Panc1 (cell line): ENCODE measurements at regions of chr17 and their contacts with region 1.

Region 1: GRCh38 chr17:80008383-80008840 is 27.3 kb downstream of the TBC1D16 start:
- DNase-seq: no peak
- ATAC-seq: peak; percentile 87
- H3K4me3 ChIP-seq: no peak overlapping the region
- H3K27ac ChIP-seq: no peak overlapping the region
- H3K4me1 ChIP-seq: peaks cover 7% of the 10 kb centered on the region
- H3K27me3 ChIP-seq: no peaks in the 10 kb centered on the region
- CTCF ChIP-seq: peak; percentile 99

Region 2: DNA sequence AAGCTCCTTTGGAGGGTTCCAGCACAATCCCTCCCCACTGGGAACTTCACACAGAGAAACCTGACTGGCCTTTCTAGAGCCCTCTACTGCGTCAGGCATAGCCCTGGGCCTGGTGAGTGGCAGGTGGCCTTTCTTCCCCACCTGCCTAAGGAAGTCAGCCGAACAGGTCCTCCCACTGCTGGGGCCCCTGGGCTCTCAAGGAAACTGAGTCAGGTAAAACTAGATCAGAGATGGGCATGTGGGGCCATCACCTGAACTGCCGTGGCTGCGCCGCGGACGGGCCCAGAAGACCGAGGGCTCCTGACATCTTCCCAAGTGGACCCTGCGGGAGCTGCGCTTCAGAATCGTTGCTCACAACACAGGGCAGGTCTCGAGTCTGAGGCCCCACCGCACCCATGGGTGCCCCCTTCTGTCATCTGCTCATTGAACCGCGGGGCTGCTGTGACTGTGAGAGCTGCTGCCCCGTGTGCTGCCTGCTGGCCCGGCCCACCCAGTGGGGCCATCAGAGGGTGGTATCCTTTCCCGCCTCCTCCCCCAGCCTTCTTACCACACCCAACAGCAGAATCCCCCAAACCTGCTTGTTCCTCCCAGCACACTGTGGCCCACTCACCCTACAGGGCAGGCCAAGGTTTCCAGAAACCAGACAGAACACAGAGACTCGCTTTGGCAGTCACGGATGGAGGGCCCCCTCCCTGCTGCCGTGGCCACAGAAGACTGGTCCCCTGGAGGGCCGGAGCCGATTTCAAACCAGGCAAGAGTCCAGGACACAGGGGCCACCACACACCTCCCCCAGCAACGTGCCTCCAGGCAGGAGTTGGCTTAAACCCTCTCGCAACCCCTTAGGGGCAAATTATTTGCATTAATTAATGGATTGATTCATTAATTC is 53.9 kb before region 1 on chr17:
- CTCF ChIA-PET with region 1: no interaction called
- POLR2A ChIA-PET with region 1: interaction called, 10 read pairs
- in situ Hi-C with region 1: no loop called
- intact Hi-C with region 1: no loop called
- DNase-seq: no peak
- ATAC-seq: no peak
- H3K4me3 ChIP-seq: no peak overlapping the region
- H3K27ac ChIP-seq: no peak overlapping the region
- H3K4me1 ChIP-seq: no peaks in the 10 kb centered on the region
- H3K27me3 ChIP-seq: no peaks in the 10 kb centered on the region
- CTCF ChIP-seq: no peak

Region 3: DNA sequence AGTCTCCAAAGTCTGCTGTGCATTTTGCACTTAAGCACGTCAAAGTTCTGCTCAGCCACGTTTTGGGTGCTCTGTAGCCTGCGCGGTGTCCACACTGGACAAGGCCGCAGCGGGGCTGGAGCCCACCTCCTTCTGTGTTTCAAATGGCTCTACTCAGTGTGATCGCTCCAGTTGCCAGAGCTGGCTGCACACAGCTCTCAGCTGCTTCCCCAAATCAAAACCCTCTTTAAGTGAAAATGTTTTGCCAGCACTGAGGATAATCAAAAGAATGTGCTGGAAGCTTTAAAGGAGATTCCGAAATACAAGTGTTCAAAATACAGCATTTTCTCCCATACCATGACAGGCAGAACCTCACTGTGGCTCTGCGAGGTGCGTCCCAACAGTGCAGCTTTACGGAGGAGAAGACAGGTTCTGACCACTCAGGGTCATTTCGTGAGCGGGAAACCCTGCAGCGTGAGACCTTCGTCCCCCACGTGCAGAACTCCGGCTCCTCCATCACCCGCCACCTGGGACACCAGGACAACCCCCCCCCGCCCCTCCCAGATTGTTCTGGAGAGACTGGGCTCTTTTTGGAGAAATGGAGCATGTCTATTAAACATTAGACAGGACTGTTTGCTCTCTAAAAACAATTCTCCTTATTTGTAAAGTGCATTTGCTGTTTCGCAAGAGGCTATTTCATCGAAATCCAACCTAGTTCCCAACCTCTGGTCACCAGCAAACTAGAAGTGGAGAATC is 10.7 kb after region 1 on chr17:
- CTCF ChIA-PET with region 1: interaction called, 7 read pairs
- POLR2A ChIA-PET with region 1: interaction called, 10 read pairs
- in situ Hi-C with region 1: no loop called
- intact Hi-C with region 1: no loop called
- DNase-seq: no peak
- ATAC-seq: no peak
- H3K4me3 ChIP-seq: no peak overlapping the region
- H3K27ac ChIP-seq: no peak overlapping the region
- H3K4me1 ChIP-seq: no peaks in the 10 kb centered on the region
- H3K27me3 ChIP-seq: no peaks in the 10 kb centered on the region
- CTCF ChIP-seq: no peak

Region 4: DNA sequence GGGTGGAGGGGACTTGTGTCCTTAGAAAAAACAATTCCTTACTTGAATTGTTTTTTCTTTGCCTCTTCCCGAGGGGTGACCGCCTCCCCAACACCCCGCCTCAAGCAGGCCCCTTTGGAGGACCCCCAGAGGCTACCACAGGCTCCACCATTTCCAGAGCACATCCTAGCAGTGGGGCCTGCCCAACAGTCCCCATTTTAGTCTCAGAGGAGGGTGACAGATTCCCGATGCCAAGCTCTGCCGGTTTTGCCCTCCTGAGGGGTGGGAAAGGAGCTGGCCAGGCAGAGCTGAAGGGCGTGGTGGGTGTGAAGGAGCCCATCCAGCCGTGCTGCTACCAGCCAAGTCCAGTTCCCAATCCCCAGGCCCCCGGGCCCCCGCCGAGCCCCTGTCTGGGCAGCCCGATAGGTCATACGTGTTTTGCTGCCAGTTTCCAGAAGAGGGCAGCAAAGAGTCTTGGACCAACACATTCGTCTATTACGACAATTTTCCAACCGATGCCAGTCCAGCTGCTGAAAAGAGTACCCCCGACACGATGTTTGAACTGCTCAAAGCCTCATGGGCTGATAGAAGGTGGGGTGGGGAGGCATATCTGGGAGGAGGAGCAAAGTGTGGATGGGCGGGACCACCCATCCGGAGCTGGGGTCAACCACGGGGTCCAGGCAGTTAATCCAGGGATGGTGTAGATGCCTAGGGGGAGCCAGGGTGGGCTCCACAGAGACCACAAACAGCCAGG is 74.2 kb after region 1 on chr17:
- CTCF ChIA-PET with region 1: interaction called, 6 read pairs
- POLR2A ChIA-PET with region 1: no interaction called
- in situ Hi-C with region 1: no loop called
- intact Hi-C with region 1: loop called (anchors 5 kb)
- DNase-seq: no peak
- ATAC-seq: peak; percentile 82
- H3K4me3 ChIP-seq: peak overlapping the region; percentile 0 to 41; a peak in 2 of 4 replicates
- H3K27ac ChIP-seq: peak overlapping the region; percentile 66
- H3K4me1 ChIP-seq: 0 out of 2 replicates have a peak, but pooled peaks cover 6% of the 10 kb centered on the region
- H3K27me3 ChIP-seq: no peaks in the 10 kb centered on the region
- CTCF ChIP-seq: peak; percentile 94